H1 (cell line): ENCODE measurements at regions of chr1 and their contacts with region 1.

Region 1: DNA sequence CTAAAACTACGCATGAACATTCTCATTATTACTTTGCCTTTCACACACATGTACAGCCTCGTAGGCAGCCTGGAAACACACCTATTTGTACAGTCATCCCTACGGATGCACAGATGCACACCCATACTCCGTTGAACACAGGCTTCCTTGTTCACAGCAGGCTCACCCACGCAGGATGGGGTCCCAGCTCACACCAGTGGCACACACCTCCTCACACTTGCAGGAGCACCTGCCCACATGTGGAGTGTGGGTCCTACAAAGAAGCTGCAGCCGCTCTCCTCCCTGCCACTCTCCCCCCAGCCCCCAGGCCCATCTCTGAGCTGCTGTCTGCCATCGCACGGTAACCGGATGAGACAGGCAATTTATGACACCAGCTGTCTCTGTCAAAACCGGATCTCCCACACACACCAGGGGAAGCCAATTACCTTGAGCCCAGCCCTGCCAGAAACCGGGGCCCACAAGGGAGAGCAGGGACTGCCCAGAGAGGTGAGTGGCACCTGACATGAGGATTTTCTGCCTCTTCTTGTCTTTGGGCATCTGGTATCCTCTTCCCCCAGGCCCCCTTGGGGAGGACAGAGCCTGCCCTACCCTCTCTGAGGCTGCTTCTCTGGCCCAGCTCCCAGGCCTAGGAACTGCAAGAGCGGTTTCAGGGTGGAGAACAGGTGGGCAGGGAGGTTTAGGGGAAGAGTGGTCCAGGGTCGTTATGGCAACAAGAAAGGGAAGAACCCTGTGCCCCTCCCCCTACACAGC is 175.4 kb downstream of the IGSF21 start:
- DNase-seq: peak in 1 of 2 experiments; percentile 85
- H3K4me3 ChIP-seq: no peak overlapping the region
- H3K27ac ChIP-seq: no peak overlapping the region
- H3K4me1 ChIP-seq: peaks cover 13 to 31% (median 21%) of the 10 kb centered on the region in 4 experiments
- H3K27me3 ChIP-seq: no peaks in the 10 kb centered on the region
- CTCF ChIP-seq: no peak
- EP300 ChIP-seq: peak in 1 of 2 experiments; percentile 34; a peak in 1 of 3 replicates
- POLR2A ChIP-seq: no peak
- RAD21 ChIP-seq: no peak

Region 2: DNA sequence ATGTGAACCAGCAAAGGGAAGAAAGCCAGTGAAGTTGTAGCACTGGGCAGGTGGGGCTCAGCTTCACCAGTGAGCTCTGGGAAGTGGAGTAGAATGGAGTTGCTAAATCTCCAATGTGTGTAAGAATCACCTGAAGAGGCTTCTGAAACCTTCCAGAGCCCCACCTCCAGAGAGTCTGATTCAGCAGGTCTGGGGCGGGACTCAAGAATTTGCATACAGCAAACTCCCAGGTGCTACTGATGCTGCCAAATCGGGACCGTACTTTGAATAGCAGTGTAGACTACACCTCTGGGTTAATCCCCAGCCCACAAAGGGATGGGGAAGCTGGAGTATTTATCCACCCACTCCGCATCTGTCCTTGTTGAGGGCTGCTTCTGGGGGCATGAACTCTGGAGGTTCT is 21.1 kb before region 1 on chr1:
- CTCF ChIA-PET with region 1: interaction called, 5 read pairs
- POLR2A ChIA-PET with region 1: interaction called, 11 read pairs
- DNase-seq: no peak
- H3K4me3 ChIP-seq: no peak overlapping the region
- H3K27ac ChIP-seq: no peak overlapping the region
- H3K4me1 ChIP-seq: peaks cover 4 to 18% (median 12%) of the 10 kb centered on the region in 4 experiments
- H3K27me3 ChIP-seq: peaks cover 0 to 3% (median 0%) of the 10 kb centered on the region in 4 experiments; a peak in 2 of 7 replicates
- CTCF ChIP-seq: no peak
- EP300 ChIP-seq: no peak
- POLR2A ChIP-seq: no peak
- RAD21 ChIP-seq: no peak